Calu3 (cell line): ENCODE measurements at regions of chr9 and their contacts with region 1.

Region 1: DNA sequence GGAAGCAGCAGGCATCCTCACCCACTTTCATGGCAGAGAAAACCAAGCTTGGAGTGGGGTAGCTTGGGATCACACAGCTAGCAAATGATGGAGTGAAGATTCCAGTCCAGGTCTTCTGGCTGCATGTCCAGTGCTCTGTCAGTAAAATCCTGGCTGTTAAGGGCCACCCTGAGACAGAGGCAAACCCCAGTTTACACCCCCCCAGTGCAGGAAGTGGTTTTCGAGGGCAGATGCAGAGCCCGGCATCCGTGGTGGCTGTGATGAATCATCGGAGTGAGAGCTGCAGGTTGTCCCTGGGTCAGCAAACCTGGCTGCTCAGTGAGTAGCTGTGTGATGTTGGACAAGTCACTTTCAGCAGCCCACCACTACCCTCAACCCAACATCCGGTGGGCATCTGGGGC is 115.4 kb downstream of the RGS3 start:
- DNase-seq: peak; percentile 84
- H3K4me3 Mint-ChIP-seq: peak overlapping the region; percentile 64
- H3K27ac Mint-ChIP-seq: peak overlapping the region; percentile 89
- H3K4me1 Mint-ChIP-seq: peaks cover 54% of the 10 kb centered on the region
- H3K27me3 Mint-ChIP-seq: no peaks in the 10 kb centered on the region
- CTCF ChIP-seq: no peak

Region 2: GRCh38 chr9:113519401-113520108 is 59.3 kb before region 1 on chr9:
- CTCF ChIA-PET with region 1: no interaction called
- intact Hi-C with region 1: loop called (anchors 2 kb)
- DNase-seq: peak; percentile 52
- H3K4me3 Mint-ChIP-seq: peak overlapping the region; percentile 65
- H3K27ac Mint-ChIP-seq: peak overlapping the region; percentile 94
- H3K4me1 Mint-ChIP-seq: peaks cover 28% of the 10 kb centered on the region
- H3K27me3 Mint-ChIP-seq: no peaks in the 10 kb centered on the region
- CTCF ChIP-seq: no peak

Region 3: DNA sequence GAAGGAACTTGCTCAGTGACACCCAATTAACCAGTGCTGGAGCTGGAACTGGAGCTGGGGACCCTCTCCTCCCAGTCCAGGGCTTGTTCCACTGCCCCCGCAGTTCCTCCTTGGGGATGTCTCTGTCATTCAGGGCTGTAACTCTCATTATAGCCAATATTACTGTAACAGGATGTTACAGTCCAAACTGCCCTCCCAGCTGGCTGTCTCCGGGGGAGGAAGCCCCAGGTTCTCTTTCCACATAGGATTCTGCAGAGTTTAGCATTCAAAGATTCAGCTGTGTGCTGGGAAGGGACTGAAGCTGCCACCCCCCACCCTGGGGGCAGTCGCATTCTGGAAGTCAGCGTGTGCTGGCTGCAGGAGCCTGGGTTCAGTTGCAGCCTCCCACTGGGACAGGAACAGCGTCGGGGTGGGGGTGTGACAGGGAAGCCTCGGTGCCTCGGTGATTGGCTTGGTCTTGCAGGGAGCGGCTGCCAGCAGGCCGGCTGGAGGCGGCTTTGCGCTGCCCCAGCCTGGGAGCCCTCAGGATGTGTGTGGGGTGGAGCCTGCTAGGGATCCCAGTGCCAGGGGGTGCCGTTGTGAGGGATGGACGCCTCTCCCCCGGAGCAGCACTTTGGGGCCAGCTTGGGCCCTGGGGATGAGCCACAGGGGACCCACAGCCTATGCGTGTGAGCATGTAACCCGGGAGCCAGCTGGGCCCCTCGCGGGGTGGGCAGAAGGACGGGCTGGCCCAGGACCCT is 14.2 kb before region 1 on chr9:
- CTCF ChIA-PET with region 1: interaction called, 13 read pairs
- intact Hi-C with region 1: no loop called
- DNase-seq: peak; percentile 68
- H3K4me3 Mint-ChIP-seq: peak overlapping the region; percentile 92
- H3K27ac Mint-ChIP-seq: peak overlapping the region; percentile 98
- H3K4me1 Mint-ChIP-seq: peaks cover 27% of the 10 kb centered on the region
- H3K27me3 Mint-ChIP-seq: no peaks in the 10 kb centered on the region
- CTCF ChIP-seq: no peak